Dendritic cell treated with granulocyte-macrophage colony-stimulating factor and Interleukin-4, amounts not matched to agents 40 ng/mL and 50 ng/mL, for 4 days (primary cell): ENCODE measurements at regions of chr17 and their contacts with region 1.

Region 1: DNA sequence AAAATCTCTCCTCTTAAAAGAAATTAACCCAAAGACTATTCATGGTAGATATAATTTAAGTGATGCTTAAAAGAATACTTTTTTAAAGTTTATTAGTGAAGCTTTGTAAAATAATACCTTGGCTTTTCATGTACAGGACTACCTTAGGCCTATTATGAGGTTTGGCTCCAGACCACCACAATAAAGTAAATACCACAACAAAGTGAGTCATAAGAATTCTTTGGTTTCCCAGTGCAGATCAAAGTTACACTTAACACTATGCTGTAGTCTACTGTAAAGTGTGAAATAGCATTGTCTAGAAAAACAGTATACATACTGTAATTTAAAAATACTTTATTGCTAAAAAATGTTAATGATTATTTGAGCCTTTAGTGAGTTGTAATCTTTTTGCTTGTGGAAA is 31.7 kb downstream of the CLTC start:
- H3K4me3 Mint-ChIP-seq: no peak overlapping the region
- H3K27ac Mint-ChIP-seq: no peak overlapping the region
- H3K4me1 Mint-ChIP-seq: peaks cover 30% of the 10 kb centered on the region
- H3K27me3 Mint-ChIP-seq: no peaks in the 10 kb centered on the region

Region 2: GRCh38 chr17:59607817-59608403 is 43.4 kb before region 1 on chr17:
- intact Hi-C with region 1: loop called (anchors 10 kb)
- H3K4me3 Mint-ChIP-seq: no peak overlapping the region
- H3K27ac Mint-ChIP-seq: no peak overlapping the region
- H3K4me1 Mint-ChIP-seq: no peaks in the 10 kb centered on the region
- H3K27me3 Mint-ChIP-seq: no peaks in the 10 kb centered on the region

Region 3: GRCh38 chr17:59695945-59696692 is 44.8 kb after region 1 on chr17:
- intact Hi-C with region 1: loop called (anchors 5 kb)
- H3K4me3 Mint-ChIP-seq: no peak overlapping the region
- H3K27ac Mint-ChIP-seq: no peak overlapping the region
- H3K4me1 Mint-ChIP-seq: peaks cover 17% of the 10 kb centered on the region
- H3K27me3 Mint-ChIP-seq: no peaks in the 10 kb centered on the region

Region 4: GRCh38 chr17:60345227-60345626 is 693.9 kb after region 1 on chr17:
- intact Hi-C with region 1: loop called (anchors 10 kb)
- H3K4me3 Mint-ChIP-seq: no peak overlapping the region
- H3K27ac Mint-ChIP-seq: no peak overlapping the region
- H3K4me1 Mint-ChIP-seq: peaks cover 26% of the 10 kb centered on the region
- H3K27me3 Mint-ChIP-seq: no peaks in the 10 kb centered on the region